ENCODE measurements at regions of chr17 and their contacts with region 1.

Region 1: DNA sequence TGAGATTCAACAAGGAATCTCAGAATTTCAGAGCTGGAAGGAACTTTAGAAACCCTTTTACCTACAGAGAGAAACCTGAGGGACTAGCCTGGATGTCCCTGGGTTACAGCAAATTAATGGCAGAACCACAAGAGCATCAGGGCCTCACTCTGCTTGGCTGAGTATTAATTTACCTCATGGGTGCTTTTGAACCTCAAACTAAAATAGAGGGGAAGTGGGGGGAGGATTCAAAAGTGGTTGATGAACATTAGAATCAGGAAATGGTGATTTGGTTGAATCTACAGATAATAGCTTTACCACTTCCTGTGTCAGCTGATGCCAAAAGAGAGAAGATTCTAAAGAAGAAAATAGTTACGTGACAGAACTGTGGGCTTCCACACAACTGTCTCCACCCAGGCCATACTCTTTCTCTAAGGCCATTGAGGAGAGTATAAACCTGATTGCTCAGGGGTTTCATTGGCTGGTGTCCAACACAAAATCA is 11.3 kb upstream of the SKAP1 start:
- DNase-seq: peak in 9 of 10 donors; percentile 20 to 87 (median 69)
- ATAC-seq: peak; percentile 69 to 73
- H3K4me3 Mint-ChIP-seq: peak overlapping the region; percentile 48 to 83 (median 78)
- H3K27ac Mint-ChIP-seq: peak overlapping the region; percentile 85 to 98 (median 96)
- H3K4me1 Mint-ChIP-seq: peaks cover 64 to 95% (median 94%) of the 10 kb centered on the region in 4 donors
- H3K27me3 Mint-ChIP-seq: no peaks in the 10 kb centered on the region

Region 2: DNA sequence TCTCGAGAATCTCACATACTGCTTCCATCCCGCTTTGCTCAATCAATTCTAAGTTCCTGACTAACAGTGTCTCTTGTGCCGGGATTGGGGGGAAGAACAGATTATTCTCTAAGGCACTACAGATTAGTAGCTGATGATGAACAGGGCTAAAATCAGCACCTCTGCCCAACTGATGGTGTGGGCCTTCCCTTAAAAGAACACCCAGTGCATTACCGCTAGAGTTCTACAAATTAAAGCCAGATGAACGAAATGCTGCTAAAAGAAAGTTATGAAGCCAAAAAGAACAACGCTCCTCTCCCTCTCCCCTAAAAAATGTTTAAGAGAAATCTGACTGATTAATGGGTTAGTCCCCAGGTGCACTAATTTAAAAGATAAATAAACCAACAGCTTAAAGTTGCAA is 1256.6 kb before region 1 on chr17:
- POLR2A ChIA-PET with region 1: no interaction called
- DNase-seq: no peak
- ATAC-seq: no peak
- H3K4me3 Mint-ChIP-seq: peak overlapping the region in 2 of 10 donors; percentile 10 to 26
- H3K27ac Mint-ChIP-seq: no peak overlapping the region
- H3K4me1 Mint-ChIP-seq: peaks cover 32 to 65% (median 59%) of the 10 kb centered on the region in 4 donors
- H3K27me3 Mint-ChIP-seq: no peaks in the 10 kb centered on the region

Region 3: GRCh38 chr17:48413613-48414405 is 27.5 kb before region 1 on chr17:
- POLR2A ChIA-PET with region 1: interaction called, 18 read pairs
- DNase-seq: peak in 2 of 10 donors; percentile 10 to 25
- ATAC-seq: peak; percentile 55 to 81
- H3K4me3 Mint-ChIP-seq: peak overlapping the region; percentile 20 to 82 (median 68)
- H3K27ac Mint-ChIP-seq: peak overlapping the region; percentile 85 to 96 (median 92)
- H3K4me1 Mint-ChIP-seq: peaks cover 35 to 87% (median 84%) of the 10 kb centered on the region in 4 donors
- H3K27me3 Mint-ChIP-seq: no peaks in the 10 kb centered on the region

Region 4: GRCh38 chr17:48429638-48430586 is 11.4 kb before region 1 on chr17 and contains the start of gene SKAP1:
- POLR2A ChIA-PET with region 1: interaction called, 59 read pairs
- DNase-seq: peak; percentile 41 to 77 (median 62)
- ATAC-seq: peak; percentile 72 to 77
- H3K4me3 Mint-ChIP-seq: peak within 1 kb of the TSS; percentile 94 to 99 (median 96)
- H3K27ac Mint-ChIP-seq: peak within 1 kb of the TSS; percentile 95 to 100 (median 98)
- H3K4me1 Mint-ChIP-seq: peaks cover 62 to 89% (median 79%) of the 10 kb centered on the region in 4 donors
- H3K27me3 Mint-ChIP-seq: no peaks in the 10 kb centered on the region
- polyA plus RNA-seq, gene SKAP1: 223 to 237 (median 230) TPM

Region 5: GRCh38 chr17:48453447-48453846 is 12.2 kb after region 1 on chr17:
- POLR2A ChIA-PET with region 1: interaction called, 115 read pairs
- DNase-seq: peak in 4 of 10 donors; percentile 33 to 80 (median 73)
- ATAC-seq: peak; percentile 84 to 90
- H3K4me3 Mint-ChIP-seq: peak overlapping the region; percentile 51 to 88 (median 76)
- H3K27ac Mint-ChIP-seq: peak overlapping the region; percentile 36 to 96 (median 86)
- H3K4me1 Mint-ChIP-seq: peaks cover 27 to 78% (median 74%) of the 10 kb centered on the region in 4 donors
- H3K27me3 Mint-ChIP-seq: no peaks in the 10 kb centered on the region

Region 6: DNA sequence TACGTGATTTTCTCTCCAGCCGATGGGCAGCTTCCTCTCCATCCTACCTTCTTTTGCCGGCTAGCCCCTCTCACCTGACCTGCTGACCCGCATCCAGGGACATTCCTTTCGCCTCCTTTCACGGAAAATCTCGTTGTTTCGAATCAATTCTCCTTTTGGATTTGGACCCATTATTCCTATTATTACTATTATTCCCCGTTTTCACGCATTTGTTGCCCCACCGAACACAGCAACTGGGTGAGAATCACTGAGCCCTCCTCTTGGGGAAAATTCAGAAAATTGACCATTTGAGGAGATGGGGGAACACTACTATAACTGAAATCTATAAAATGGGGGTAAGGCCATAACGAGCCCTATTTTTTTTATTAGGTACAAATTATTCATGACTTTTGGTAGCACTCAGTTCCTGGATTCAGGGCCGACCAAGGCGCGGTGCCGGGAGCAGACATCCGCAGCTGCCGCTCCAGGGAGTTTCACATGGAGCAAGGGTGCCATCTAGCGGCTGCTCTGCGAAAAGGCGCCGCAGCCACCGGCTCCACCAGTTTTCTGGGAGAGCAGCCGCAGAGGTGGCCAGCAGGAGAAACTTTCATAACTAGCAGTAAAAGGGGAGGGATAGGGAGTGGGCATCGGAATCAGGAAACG is 177.1 kb after region 1 on chr17:
- POLR2A ChIA-PET with region 1: no interaction called
- DNase-seq: peak; percentile 61 to 87 (median 80)
- ATAC-seq: peak; percentile 69 to 80
- H3K4me3 Mint-ChIP-seq: peak overlapping the region in 9 of 10 donors; percentile 41 to 64 (median 58)
- H3K27ac Mint-ChIP-seq: no peak overlapping the region
- H3K4me1 Mint-ChIP-seq: peaks cover 19 to 48% (median 34%) of the 10 kb centered on the region in 4 donors
- H3K27me3 Mint-ChIP-seq: peaks cover 53 to 100% (median 86%) of the 10 kb centered on the region in 5 donors

Measured in naive thymus-derived CD8-positive, alpha-beta T cell (primary cell).